HepG2 (cell line): ENCODE measurements at regions of chr2 and their contacts with region 1.

Region 1: DNA sequence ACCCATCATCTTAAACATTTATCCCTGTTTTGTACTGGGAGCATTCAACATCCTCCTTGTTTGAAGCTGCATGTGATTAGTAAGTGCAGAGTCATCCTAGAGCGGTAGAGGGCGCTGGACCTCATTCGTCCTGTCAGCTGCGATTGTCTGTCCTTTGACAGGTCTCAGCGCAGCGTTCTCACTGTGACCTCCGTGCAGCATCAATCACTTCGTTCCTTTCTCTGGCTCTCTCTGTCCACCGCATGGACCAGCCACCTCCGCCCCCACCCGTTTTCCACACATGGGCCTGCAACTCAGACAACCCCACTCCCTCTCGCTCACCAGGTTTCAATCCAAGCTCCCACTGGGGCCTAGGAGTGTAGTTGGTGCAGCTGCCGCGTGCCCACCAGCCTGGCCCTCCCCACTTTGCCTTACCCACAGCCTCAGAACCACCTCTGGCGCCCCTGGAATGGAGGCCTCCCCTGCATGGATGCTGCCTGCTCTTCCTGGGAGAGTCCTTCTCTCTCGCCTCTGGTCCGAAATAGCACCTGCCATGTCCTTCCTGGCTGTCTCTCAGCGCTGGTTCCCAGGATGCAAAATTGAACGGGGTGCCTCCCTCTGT is 90.5 kb downstream of the NDUFA10 start:
- DNase-seq: peak; percentile 74
- ATAC-seq: peak; percentile 83
- H3K4me3 ChIP-seq: no peak overlapping the region
- H3K27ac ChIP-seq: no peak overlapping the region
- H3K4me1 ChIP-seq: no peaks in the 10 kb centered on the region
- H3K27me3 ChIP-seq: no peaks in the 10 kb centered on the region; a peak in 1 of 5 replicates
- CTCF ChIP-seq: peak; percentile 88
- EP300 ChIP-seq: no peak
- POLR2A ChIP-seq: no peak
- RAD21 ChIP-seq: no peak; the same call in 1 of the 2 replicates

Region 2: GRCh38 chr2:239991689-239992314 is 57.1 kb after region 1 on chr2:
- CTCF ChIA-PET with region 1: interaction called, 3 read pairs
- POLR2A ChIA-PET with region 1: no interaction called
- in situ Hi-C with region 1: no loop called
- intact Hi-C with region 1: loop called (anchors 1 kb)
- DNase-seq: peak; percentile 48
- ATAC-seq: peak; percentile 63
- H3K4me3 ChIP-seq: no peak overlapping the region
- H3K27ac ChIP-seq: no peak overlapping the region
- H3K4me1 ChIP-seq: no peaks in the 10 kb centered on the region
- H3K27me3 ChIP-seq: no peaks in the 10 kb centered on the region
- CTCF ChIP-seq: peak; percentile 77
- EP300 ChIP-seq: no peak
- POLR2A ChIP-seq: no peak
- RAD21 ChIP-seq: peak; percentile 42; the same call in 1 of the 2 replicates

Region 3: DNA sequence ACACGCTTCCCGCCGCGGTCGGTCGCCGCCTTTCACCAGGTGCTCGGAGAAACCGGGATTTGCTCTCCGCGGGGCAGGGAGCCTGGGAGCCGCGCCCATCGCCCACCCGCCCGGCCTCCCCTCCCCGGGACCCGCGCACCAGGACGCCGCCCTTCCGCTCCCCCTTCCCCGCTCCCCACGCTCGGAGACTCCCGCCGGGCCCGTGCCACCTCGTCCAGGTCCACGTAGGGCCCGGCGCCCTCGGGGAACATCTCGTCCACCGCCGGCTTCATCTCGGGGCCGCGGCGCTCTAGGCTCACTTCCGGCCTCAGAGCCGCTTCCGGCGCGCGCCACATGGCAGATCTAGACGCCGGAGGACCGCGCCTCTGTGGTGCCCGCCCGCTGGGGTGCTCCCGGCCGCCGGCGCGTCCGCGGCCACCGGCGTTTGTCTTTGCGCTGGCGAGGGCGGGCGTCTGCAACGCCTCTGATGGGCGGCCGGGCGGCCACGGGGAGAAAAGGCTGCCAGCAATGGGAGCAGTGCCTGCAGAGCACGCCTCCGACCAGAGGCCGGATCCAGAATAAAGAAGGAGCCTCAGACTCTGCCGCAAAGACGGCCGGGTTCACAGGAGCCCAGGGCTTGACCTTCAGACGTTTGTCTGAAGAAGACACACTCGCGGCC is 201.5 kb after region 1 on chr2 and contains the start of gene COPS9:
- CTCF ChIA-PET with region 1: no interaction called
- POLR2A ChIA-PET with region 1: no interaction called
- in situ Hi-C with region 1: loop called (anchors 10 kb)
- intact Hi-C with region 1: loop called (anchors 10 kb)
- DNase-seq: peak; percentile 76
- ATAC-seq: peak; percentile 96
- H3K4me3 ChIP-seq: peak within 1 kb of the TSS; percentile 99 to 100 (median 99)
- H3K27ac ChIP-seq: peak within 1 kb of the TSS; percentile 54
- H3K4me1 ChIP-seq: peaks cover 31% of the 10 kb centered on the region
- H3K27me3 ChIP-seq: peaks cover 4 to 44% of the 10 kb centered on the region in 2 experiments; a peak in 4 of 5 replicates
- CTCF ChIP-seq: peak; percentile 37
- EP300 ChIP-seq: 0 out of 4 replicates have a peak, but pooled peaks of 1 of the 2 experiments have one; percentile 9
- POLR2A ChIP-seq: peak; percentile 72 to 85; a peak in 3 of 4 replicates
- RAD21 ChIP-seq: peak; percentile 46; the same call in 1 of the 2 replicates
- total RNA-seq, gene COPS9: 180 and 208 TPM in 2 replicates